Sigmoid colon (tissue), 7 donors: ENCODE measurements at regions of chr10 and their contacts with region 1.

Region 1: GRCh38 chr10:88880282-88881076 is 434 bp downstream of the STAMBPL1 start:
- DNase-seq: peak; percentile 89
- H3K4me3 ChIP-seq: peak overlapping the region; percentile 56 to 78 (median 70)
- H3K27ac ChIP-seq: peak overlapping the region; percentile 77 to 92 (median 86)
- H3K4me1 ChIP-seq: peaks cover 0 to 16% (median 7%) of the 10 kb centered on the region in 4 donors
- H3K27me3 ChIP-seq: no peaks in the 10 kb centered on the region
- CTCF ChIP-seq: peak in 1 of 4 experiments; percentile 9
- EP300 ChIP-seq: peak in 1 of 4 donors; percentile 26
- POLR2A ChIP-seq: peak; percentile 27 to 66

Region 2: DNA sequence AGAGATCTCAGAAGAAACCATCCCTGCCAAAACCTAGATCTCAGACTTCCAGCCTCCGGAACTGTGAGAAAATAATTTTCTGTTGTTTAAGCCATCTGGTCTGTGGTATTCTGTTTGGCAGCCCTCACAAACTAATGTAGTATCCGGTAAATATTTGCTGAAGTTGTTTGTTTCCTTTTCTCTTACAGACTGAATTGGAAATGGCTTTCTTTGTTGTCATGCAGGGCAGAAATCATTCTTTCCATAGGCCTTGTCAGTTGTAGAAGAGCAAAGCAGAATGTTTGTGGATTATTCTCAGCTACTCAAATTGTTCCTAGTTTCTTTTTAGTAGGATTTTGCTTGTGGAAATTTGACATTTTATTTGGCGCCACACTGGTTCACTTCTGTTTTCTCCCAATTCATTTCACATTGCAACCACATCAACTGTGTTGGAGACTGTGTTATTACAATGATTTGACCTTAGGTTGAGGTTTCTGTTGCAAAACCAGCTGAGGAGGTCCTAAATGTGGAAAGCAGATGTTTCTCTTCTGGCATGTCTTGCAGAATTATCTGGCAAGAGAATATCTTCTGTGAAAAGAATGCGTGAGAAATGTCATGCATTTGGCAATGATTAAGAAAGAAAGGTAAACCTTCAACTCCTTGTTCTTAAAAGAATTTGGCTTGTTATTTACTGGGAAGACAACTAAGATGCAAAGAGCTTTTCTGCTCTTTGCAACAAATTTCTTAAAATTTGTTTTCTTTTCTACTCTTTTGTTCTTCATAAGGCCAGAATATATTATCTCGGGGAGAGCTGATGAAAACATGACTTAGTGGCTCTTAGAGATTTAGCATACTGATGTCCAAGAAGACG is 46.3 kb after region 1 on chr10:
- intact Hi-C with region 1: loop called (anchors 5 kb)
- DNase-seq: no peak
- H3K4me3 ChIP-seq: peak overlapping the region in 1 of 4 donors; percentile 2
- H3K27ac ChIP-seq: peak overlapping the region; percentile 60 to 69 (median 67)
- H3K4me1 ChIP-seq: peaks cover 0 to 26% (median 22%) of the 10 kb centered on the region in 4 donors
- H3K27me3 ChIP-seq: no peaks in the 10 kb centered on the region
- CTCF ChIP-seq: no peak
- EP300 ChIP-seq: no peak
- POLR2A ChIP-seq: no peak